ENCODE measurements at regions of chr3 and their contacts with region 1.

Region 1: GRCh38 chr3:187164885-187165543 is 25.7 kb upstream of the RPL39L start:
- DNase-seq: peak; percentile 41
- H3K4me3 ChIP-seq: peak overlapping the region in 1 of 2 experiments; percentile 14; a peak in 1 of 4 replicates
- H3K27ac ChIP-seq: no peak overlapping the region
- H3K4me1 ChIP-seq: no peaks in the 10 kb centered on the region
- H3K27me3 ChIP-seq: no peaks in the 10 kb centered on the region; the same call in 1 of the 2 replicates
- CTCF ChIP-seq: peak; percentile 83
- EP300 ChIP-seq: no peak
- RAD21 ChIP-seq: peak; percentile 69

Region 2: GRCh38 chr3:187101184-187102072 is 63.6 kb before region 1 on chr3:
- CTCF ChIA-PET with region 1: interaction called, 12 read pairs
- POLR2A ChIA-PET with region 1: no interaction called
- DNase-seq: peak; percentile 54
- H3K4me3 ChIP-seq: peak overlapping the region; percentile 40 to 55
- H3K27ac ChIP-seq: peak overlapping the region; percentile 55 to 78; a peak in 3 of 4 replicates
- H3K4me1 ChIP-seq: peaks cover 9 to 10% of the 10 kb centered on the region in 2 experiments
- H3K27me3 ChIP-seq: no peaks in the 10 kb centered on the region
- CTCF ChIP-seq: no peak
- EP300 ChIP-seq: peak in 1 of 2 experiments; percentile 27; a peak in 1 of 4 replicates
- RAD21 ChIP-seq: no peak

Region 3: DNA sequence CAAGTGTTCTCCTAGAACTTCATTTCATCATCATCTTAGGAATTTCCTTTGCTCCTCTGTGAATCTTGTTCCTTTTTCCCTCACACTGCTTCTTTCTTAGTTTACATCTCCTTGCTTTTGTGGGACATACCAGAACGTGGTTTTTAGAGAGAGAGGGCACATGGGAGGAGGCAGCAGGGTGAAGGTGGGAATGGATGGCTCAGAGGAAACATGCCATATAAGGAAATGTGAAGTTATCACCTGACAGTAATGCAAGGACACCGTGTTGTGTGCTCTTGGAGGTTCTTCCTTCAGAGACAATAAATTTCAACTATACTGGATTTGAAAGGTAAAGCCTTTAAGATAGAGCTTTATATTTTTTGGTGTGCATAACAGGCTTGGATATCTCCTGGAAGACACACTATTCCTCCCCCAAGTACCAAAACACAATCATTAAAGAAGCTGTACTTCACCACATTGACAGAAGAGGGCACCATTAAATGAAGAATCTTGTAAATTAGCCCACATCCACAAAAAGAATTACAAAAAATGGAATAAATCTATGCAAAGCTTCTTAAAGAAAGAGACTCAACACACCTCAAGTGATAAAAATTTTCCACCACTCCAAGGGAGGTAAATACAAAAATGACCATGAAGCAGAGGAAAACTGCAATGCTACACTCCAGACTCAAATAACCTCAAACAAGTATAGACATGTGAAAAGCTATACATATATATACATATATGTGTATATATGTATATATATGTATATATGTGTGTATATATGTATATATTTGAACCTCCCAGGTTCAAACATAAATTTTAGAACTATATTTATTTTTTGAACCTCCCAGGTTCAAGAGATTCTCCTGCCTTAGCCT is 51.9 kb before region 1 on chr3:
- CTCF ChIA-PET with region 1: interaction called, 60 read pairs
- POLR2A ChIA-PET with region 1: no interaction called
- DNase-seq: peak; percentile 16
- H3K4me3 ChIP-seq: no peak overlapping the region; a peak in 1 of 4 replicates
- H3K27ac ChIP-seq: no peak overlapping the region
- H3K4me1 ChIP-seq: no peaks in the 10 kb centered on the region
- H3K27me3 ChIP-seq: no peaks in the 10 kb centered on the region
- CTCF ChIP-seq: peak; percentile 70
- EP300 ChIP-seq: no peak
- RAD21 ChIP-seq: peak; percentile 60

Region 4: GRCh38 chr3:187139126-187139894 is 25.7 kb before region 1 on chr3 and contains the start of gene RPL39L:
- CTCF ChIA-PET with region 1: interaction called, 45 read pairs
- POLR2A ChIA-PET with region 1: interaction called, 5 read pairs
- DNase-seq: peak; percentile 96
- H3K4me3 ChIP-seq: peak within 1 kb of the TSS; percentile 64 to 92
- H3K27ac ChIP-seq: peak within 1 kb of the TSS; percentile 42 to 65
- H3K4me1 ChIP-seq: no peaks in the 10 kb centered on the region; a peak in 1 of 4 replicates
- H3K27me3 ChIP-seq: no peaks in the 10 kb centered on the region; the same call in 1 of the 2 replicates
- CTCF ChIP-seq: peak; percentile 97
- EP300 ChIP-seq: no peak
- RAD21 ChIP-seq: peak; percentile 54
- polyA plus RNA-seq, gene RPL39L: 21.0 and 25.3 TPM in 2 replicates